Mammary epithelial cell (primary cell): ENCODE measurements at regions of chr16 and their contacts with region 1.

Region 1: GRCh38 chr16:27109666-27110523 is 43.2 kb downstream of the C16orf82 start:
- DNase-seq: peak; percentile 53
- H3K4me3 ChIP-seq: peak overlapping the region; percentile 23 to 35 (median 34)
- H3K27ac ChIP-seq: no peak overlapping the region
- H3K4me1 ChIP-seq: no peaks in the 10 kb centered on the region
- H3K27me3 ChIP-seq: no peaks in the 10 kb centered on the region
- CTCF ChIP-seq: peak; percentile 46 to 76

Region 2: GRCh38 chr16:25235991-25236390 is 1873.9 kb before region 1 on chr16:
- CTCF ChIA-PET with region 1: interaction called, 18 read pairs
- dilution Hi-C with region 1: no loop called
- in situ Hi-C with region 1: no loop called
- intact Hi-C with region 1: no loop called
- DNase-seq: no peak
- H3K4me3 ChIP-seq: no peak overlapping the region
- H3K27ac ChIP-seq: no peak overlapping the region
- H3K4me1 ChIP-seq: no peaks in the 10 kb centered on the region
- H3K27me3 ChIP-seq: no peaks in the 10 kb centered on the region
- CTCF ChIP-seq: no peak

Region 3: DNA sequence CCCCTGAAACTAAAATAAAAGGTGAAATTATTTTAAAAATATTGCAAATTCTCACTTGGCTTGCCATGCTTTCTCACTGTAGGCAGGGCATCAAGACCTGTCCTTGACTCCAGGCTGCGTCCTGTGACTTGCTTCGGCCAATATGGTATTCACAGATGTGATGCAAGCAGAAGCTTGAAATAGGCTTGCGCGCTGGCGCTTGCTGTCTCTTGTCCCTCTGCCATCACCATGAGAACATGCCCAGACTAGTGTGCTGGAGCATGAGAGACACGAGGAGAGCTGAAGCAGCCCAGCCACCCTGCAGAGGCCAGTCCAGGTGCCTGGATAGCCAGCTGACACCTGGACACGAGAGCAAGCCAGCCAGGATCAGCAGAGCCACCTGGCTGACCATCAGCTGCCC is 1830.4 kb before region 1 on chr16:
- CTCF ChIA-PET with region 1: interaction called, 14 read pairs
- dilution Hi-C with region 1: no loop called
- in situ Hi-C with region 1: loop called (anchors 25 kb)
- intact Hi-C with region 1: loop called (anchors 1 kb)
- DNase-seq: peak; percentile 67
- H3K4me3 ChIP-seq: no peak overlapping the region
- H3K27ac ChIP-seq: no peak overlapping the region
- H3K4me1 ChIP-seq: peaks cover 8% of the 10 kb centered on the region
- H3K27me3 ChIP-seq: no peaks in the 10 kb centered on the region
- CTCF ChIP-seq: no peak

Region 4: DNA sequence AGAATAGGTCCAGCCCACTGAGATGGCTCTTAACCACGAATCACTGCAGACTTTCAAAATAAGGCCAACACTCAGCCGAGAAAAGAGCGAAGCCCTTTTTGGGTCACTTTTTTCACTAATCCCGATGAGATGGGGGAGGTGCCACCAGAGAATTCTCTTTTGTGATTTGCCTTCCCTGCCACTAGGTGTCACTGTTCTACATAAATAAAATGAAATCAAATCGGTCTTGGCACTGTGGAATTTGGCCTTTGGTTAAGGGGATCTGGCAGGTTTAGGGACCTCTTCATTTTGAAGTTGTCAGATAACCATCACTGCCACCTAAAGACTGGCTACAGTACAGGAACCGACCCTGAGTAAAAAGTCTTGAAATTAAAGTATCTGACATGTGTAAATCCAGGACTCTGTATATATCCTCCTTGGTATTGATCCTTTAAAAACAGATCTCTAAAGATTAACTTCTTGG is 1271.1 kb before region 1 on chr16:
- CTCF ChIA-PET with region 1: no interaction called
- dilution Hi-C with region 1: no loop called
- in situ Hi-C with region 1: loop called in 1 of 2 experiments (anchors 25 kb)
- intact Hi-C with region 1: loop called (anchors 5 kb)
- DNase-seq: peak; percentile 13
- H3K4me3 ChIP-seq: no peak overlapping the region
- H3K27ac ChIP-seq: no peak overlapping the region
- H3K4me1 ChIP-seq: no peaks in the 10 kb centered on the region
- H3K27me3 ChIP-seq: no peaks in the 10 kb centered on the region
- CTCF ChIP-seq: peak; percentile 67

Region 5: DNA sequence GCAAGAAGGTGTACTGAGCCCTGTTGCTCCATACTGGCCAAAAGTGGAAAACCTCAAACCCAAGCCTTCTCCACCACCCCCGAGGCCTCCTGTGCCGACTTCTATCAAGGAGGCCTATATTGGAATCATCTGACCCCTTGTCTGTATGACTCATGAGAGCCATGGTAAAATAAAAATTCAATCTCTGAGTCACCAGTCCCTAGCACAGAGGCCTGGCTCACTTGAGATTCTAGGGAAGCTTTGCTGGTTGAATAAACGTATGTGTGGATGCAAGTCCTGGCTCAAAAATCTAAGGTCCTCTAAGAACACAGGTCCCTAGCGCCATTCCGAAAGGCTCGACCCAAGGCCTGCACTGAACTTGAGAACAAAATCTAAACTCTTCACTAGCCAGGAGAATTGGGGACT is 143.6 kb after region 1 on chr16:
- CTCF ChIA-PET with region 1: interaction called, 46 read pairs
- dilution Hi-C with region 1: no loop called
- in situ Hi-C with region 1: no loop called
- intact Hi-C with region 1: no loop called
- DNase-seq: peak; percentile 85
- H3K4me3 ChIP-seq: no peak overlapping the region
- H3K27ac ChIP-seq: peak overlapping the region; percentile 31
- H3K4me1 ChIP-seq: peaks cover 37% of the 10 kb centered on the region
- H3K27me3 ChIP-seq: no peaks in the 10 kb centered on the region
- CTCF ChIP-seq: no peak

Region 6: GRCh38 chr16:27268376-27269299 is 158.7 kb after region 1 on chr16 and contains the start of gene NSMCE1:
- CTCF ChIA-PET with region 1: no interaction called
- dilution Hi-C with region 1: no loop called
- in situ Hi-C with region 1: no loop called
- intact Hi-C with region 1: no loop called
- DNase-seq: peak; percentile 91
- H3K4me3 ChIP-seq: peak within 1 kb of the TSS; percentile 78 to 90 (median 87)
- H3K27ac ChIP-seq: peak within 1 kb of the TSS; percentile 59
- H3K4me1 ChIP-seq: peaks cover 13% of the 10 kb centered on the region
- H3K27me3 ChIP-seq: no peaks in the 10 kb centered on the region
- CTCF ChIP-seq: peak in 1 of 2 donors; percentile 31
- total RNA-seq, gene NSMCE1: 71.6 to 81.2 TPM

Region 7: DNA sequence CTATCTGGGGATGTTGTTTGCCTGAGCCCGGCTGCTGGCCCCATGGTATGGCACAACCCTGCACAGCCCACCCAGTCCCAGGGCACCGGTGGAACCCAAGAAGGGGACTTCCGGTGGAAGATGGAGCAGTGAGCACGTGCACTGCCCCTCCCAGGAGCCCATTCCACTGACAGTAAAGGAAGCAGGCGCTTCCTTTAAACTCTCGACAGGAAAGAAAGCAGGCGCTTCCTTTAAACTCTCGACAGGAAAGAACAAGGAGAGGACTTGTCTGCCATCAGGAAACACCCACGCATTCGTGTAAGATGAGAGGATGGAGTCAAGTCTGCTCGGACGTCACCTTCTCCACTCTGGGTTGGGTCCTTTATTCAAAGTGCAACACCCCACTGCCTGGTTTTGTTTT is 345.8 kb after region 1 on chr16:
- CTCF ChIA-PET with region 1: no interaction called
- dilution Hi-C with region 1: no loop called
- in situ Hi-C with region 1: no loop called
- intact Hi-C with region 1: loop called (anchors 5 kb)
- DNase-seq: peak; percentile 40
- H3K4me3 ChIP-seq: no peak overlapping the region
- H3K27ac ChIP-seq: no peak overlapping the region
- H3K4me1 ChIP-seq: peaks cover 17% of the 10 kb centered on the region
- H3K27me3 ChIP-seq: no peaks in the 10 kb centered on the region
- CTCF ChIP-seq: no peak